CD4-positive, alpha-beta memory T cell (primary cell): ENCODE measurements at regions of chr11 and their contacts with region 1.

Region 1: DNA sequence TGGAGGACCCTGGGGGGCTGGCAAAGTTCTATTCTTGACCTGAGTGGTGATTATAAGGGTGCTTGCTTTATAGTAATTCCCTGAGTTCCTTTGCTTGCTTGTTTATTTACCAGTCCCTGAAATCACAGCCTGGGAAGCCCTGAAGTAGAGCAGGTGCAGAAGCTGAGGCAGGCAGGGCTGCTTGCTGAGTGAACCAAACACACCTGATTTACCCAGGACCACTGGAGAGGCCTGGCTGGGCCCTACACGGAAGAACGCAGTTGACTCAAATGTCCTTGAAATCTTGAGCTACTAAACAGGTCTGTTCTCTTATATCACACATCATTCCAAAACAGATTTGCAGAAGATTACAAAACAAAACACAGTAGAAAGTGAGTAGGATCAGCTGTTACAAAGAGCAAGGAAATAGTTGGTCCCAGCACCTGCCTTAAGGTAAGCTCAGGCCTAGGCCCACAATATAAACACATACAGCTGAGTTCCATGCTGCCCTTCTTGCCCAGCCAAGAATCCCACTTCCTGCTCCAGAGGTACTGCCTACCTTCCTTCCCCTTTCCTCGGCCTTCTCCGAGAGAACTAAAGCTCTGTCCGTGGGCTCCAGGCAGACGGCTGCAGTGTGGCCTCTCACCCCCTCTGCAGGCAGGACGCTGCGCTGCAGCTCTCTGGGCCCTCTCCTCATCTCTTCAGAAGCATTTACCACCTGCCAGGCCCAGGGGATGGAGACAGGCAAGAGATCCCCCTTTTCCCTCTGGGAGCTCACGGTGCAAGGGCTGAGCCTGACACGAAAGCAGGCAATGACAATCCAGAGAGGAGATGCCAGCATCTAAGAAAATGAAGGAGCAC is 46.1 kb upstream of the SCUBE2 start:
- DNase-seq: peak; percentile 51 to 54 (median 54)
- H3K4me3 ChIP-seq: no peak overlapping the region
- H3K4me3 Mint-ChIP-seq: peak overlapping the region in 6 of 8 donors; percentile 50 to 80 (median 54)
- H3K27ac ChIP-seq: no peak overlapping the region
- H3K27ac Mint-ChIP-seq: peak overlapping the region in 6 of 7 donors; percentile 15 to 90 (median 64)
- H3K4me1 ChIP-seq: peaks cover 26% of the 10 kb centered on the region
- H3K4me1 Mint-ChIP-seq: peaks cover 11 to 36% (median 21%) of the 10 kb centered on the region in 4 donors
- H3K27me3 ChIP-seq: no peaks in the 10 kb centered on the region
- H3K27me3 Mint-ChIP-seq: no peaks in the 10 kb centered on the region

Region 2: GRCh38 chr11:8688414-8689362 is 448.8 kb before region 1 on chr11:
- CTCF ChIA-PET with region 1: no interaction called
- POLR2A ChIA-PET with region 1: no interaction called
- intact Hi-C with region 1: loop called (anchors 1 kb)
- DNase-seq: peak; percentile 60 to 82 (median 68)
- H3K4me3 ChIP-seq: peak overlapping the region; percentile 86 to 96
- H3K4me3 Mint-ChIP-seq: peak overlapping the region; percentile 94 to 98 (median 97)
- H3K27ac ChIP-seq: peak overlapping the region; percentile 74
- H3K27ac Mint-ChIP-seq: peak overlapping the region; percentile 95 to 99 (median 97)
- H3K4me1 ChIP-seq: peaks cover 36% of the 10 kb centered on the region
- H3K4me1 Mint-ChIP-seq: peaks cover 31 to 57% (median 43%) of the 10 kb centered on the region in 4 donors
- H3K27me3 ChIP-seq: no peaks in the 10 kb centered on the region
- H3K27me3 Mint-ChIP-seq: no peaks in the 10 kb centered on the region

Region 3: DNA sequence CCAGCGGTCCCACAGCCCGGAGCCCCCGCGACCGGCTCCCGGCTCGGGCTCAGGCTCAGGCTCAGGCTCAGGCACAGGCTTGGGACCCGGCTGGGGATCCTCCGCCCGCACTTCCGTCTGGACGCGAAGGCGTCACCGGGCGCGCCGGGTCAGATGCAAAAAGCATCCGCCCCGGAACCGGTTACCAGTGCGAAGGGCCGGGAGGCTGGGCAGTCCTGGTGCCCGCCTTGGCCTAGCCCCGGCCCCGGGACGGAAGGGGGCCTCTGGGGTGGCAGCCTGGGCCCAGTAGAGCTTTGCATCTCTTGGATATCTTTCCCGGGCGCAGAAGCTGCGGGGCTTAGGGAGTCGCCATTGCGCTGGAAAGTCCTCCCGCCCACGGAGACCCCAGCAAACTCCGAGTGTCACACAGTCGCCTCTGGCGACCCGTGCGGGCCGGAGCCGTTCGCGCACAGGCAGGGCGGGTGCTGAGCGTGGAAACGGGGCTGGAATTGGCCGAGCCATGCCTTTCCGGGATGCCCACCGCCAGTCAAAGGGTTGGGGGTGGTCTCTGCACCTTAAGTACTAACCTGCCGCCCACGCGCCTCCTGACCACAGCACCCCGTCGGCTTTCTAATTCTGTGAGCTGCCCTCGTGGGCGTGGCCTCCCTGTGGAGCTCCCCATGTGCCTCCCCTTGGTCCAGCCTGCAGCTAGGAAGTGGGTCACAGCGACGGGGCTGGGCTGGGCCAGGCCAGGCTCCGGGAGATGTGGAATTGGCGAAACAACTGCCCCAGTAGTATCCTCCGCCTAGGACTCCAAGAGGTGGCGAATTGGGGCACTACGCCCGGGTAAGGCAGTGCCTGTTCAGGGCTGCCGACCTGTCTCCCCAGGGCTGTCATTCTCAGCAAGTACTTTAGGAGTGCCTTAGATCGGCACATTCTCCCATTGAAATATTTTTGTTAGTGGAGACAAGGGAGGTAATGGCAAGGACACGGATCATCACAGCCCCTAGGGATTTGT is 172.9 kb before region 1 on chr11 and contains the start of gene TMEM9B:
- CTCF ChIA-PET with region 1: interaction called, 21 read pairs
- POLR2A ChIA-PET with region 1: interaction called, 10 read pairs
- intact Hi-C with region 1: no loop called
- DNase-seq: peak; percentile 72 to 83 (median 76)
- H3K4me3 ChIP-seq: peak within 1 kb of the TSS; percentile 89 to 91
- H3K4me3 Mint-ChIP-seq: peak within 1 kb of the TSS; percentile 93 to 98 (median 97)
- H3K27ac ChIP-seq: peak within 1 kb of the TSS; percentile 90
- H3K27ac Mint-ChIP-seq: peak within 1 kb of the TSS; percentile 91 to 99 (median 98)
- H3K4me1 ChIP-seq: peaks cover 26% of the 10 kb centered on the region
- H3K4me1 Mint-ChIP-seq: peaks cover 20 to 41% (median 30%) of the 10 kb centered on the region in 4 donors
- H3K27me3 ChIP-seq: no peaks in the 10 kb centered on the region
- H3K27me3 Mint-ChIP-seq: no peaks in the 10 kb centered on the region
- total RNA-seq, gene TMEM9B: 36.8 to 38.9 TPM

Region 4: GRCh38 chr11:9092853-9093778 is 44.4 kb before region 1 on chr11:
- CTCF ChIA-PET with region 1: interaction called, 19 read pairs
- POLR2A ChIA-PET with region 1: no interaction called
- intact Hi-C with region 1: no loop called
- DNase-seq: no peak
- H3K4me3 ChIP-seq: no peak overlapping the region
- H3K4me3 Mint-ChIP-seq: peak overlapping the region in 4 of 8 donors; percentile 36 to 59 (median 44)
- H3K27ac ChIP-seq: no peak overlapping the region
- H3K27ac Mint-ChIP-seq: no peak overlapping the region
- H3K4me1 ChIP-seq: no peaks in the 10 kb centered on the region
- H3K4me1 Mint-ChIP-seq: peaks cover 4 to 10% (median 6%) of the 10 kb centered on the region in 4 donors
- H3K27me3 ChIP-seq: peaks cover 15% of the 10 kb centered on the region
- H3K27me3 Mint-ChIP-seq: peaks cover 43 to 58% of the 10 kb centered on the region in 2 donors

Region 5: DNA sequence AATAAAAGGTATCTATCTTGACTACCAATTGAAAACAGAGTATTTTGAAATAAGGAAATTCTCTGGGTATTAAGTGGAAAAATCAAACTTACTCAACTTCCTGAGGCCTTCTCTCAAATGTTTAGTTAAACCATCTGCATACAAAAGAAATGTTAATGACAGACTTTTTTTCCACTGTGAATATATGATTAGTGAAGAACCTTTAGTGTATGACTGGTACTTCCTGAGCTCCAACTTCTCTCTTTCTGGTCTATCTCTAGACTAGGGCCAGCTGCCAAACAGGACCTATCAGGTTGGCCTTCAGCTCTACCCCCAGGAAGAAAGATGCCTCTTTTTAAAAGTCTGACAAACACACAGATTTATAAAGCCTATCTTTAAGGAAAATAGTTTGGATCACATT is 22.7 kb after region 1 on chr11:
- CTCF ChIA-PET with region 1: interaction called, 10 read pairs
- POLR2A ChIA-PET with region 1: no interaction called
- intact Hi-C with region 1: no loop called
- DNase-seq: no peak
- H3K4me3 ChIP-seq: no peak overlapping the region
- H3K4me3 Mint-ChIP-seq: no peak overlapping the region
- H3K27ac ChIP-seq: no peak overlapping the region
- H3K27ac Mint-ChIP-seq: peak overlapping the region in 3 of 7 donors; percentile 5 to 85 (median 30)
- H3K4me1 ChIP-seq: no peaks in the 10 kb centered on the region
- H3K4me1 Mint-ChIP-seq: peaks cover 1 to 13% (median 9%) of the 10 kb centered on the region in 4 donors
- H3K27me3 ChIP-seq: no peaks in the 10 kb centered on the region
- H3K27me3 Mint-ChIP-seq: no peaks in the 10 kb centered on the region

Region 6: DNA sequence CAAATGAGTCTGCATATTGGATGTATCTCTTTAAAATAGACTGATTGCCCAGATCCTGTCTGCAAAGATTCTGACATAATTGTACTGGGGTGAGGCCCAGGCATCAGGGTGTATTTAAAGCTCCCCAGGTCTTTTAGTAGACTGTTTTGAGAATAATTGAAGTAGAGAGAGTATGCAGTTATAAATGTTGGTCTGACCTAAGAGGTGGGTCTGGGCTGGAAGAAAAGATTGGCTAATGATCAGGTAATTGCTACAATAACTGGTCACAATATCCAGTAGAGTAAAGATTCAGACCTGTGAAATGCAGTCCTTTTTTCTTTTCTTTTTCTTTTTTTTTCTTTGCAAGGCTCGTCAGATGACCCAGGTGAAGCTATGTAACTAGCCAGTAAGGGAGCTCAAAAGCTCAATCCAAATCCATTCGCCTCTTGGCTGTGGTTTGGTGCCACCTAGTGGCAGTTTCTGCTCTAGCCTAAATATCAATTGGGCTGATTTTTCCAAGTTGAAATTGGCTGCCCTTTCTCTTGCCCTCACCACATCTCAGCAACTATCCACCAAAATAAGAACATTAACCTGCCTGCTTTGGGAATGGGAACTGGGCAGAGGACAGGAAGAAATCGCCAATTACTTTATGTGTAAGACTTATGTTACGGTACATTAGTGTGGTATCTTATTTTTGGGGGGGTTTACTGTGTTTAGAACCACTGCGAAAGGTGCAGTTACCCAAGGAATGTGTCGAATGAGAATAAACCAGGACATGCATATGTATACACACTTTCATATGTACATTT is 369.2 kb after region 1 on chr11:
- CTCF ChIA-PET with region 1: interaction called, 18 read pairs
- POLR2A ChIA-PET with region 1: no interaction called
- intact Hi-C with region 1: no loop called
- DNase-seq: peak; percentile 63 to 68 (median 65)
- H3K4me3 ChIP-seq: no peak overlapping the region
- H3K4me3 Mint-ChIP-seq: no peak overlapping the region
- H3K27ac ChIP-seq: no peak overlapping the region
- H3K27ac Mint-ChIP-seq: peak overlapping the region in 3 of 7 donors; percentile 62 to 73 (median 67)
- H3K4me1 ChIP-seq: peaks cover 10% of the 10 kb centered on the region
- H3K4me1 Mint-ChIP-seq: peaks cover 9 to 18% (median 12%) of the 10 kb centered on the region in 4 donors
- H3K27me3 ChIP-seq: no peaks in the 10 kb centered on the region
- H3K27me3 Mint-ChIP-seq: no peaks in the 10 kb centered on the region